ENCODE measurements at regions of chrX and their contacts with region 1.

Region 1: DNA sequence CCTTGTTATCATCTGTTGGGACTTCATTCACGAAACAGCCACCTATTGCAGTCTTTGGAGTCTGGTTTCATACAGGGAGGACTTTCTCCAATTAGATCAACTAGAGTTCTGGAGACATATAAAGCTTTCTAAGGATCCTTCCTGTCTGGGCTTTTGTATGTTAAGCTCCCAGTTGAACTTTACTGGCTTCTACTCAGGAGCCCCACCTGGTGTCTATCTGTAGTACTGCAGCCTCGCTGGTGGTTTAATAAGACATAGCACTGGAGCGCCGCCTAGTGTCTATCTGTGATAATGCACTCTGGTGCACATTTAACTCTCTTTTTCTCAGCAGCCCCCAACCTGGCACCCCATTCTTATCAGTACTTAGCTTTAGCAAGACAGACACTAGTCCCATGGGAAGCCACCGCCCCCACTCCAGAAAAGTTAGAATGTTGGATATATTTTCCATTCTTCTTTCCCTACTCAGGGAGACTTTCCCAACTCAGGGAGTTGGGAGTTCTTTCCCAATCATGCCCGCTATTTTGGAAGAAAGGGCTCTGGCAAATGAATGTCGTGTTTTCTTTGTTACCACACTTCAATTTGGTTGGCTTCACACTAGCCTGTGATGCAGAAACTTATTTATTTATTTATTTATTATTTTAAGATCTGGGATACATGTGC is 36.9 kb upstream of the SYTL4 start:
- DNase-seq: peak; percentile 72 to 94
- ATAC-seq: peak; percentile 78

Region 2: DNA sequence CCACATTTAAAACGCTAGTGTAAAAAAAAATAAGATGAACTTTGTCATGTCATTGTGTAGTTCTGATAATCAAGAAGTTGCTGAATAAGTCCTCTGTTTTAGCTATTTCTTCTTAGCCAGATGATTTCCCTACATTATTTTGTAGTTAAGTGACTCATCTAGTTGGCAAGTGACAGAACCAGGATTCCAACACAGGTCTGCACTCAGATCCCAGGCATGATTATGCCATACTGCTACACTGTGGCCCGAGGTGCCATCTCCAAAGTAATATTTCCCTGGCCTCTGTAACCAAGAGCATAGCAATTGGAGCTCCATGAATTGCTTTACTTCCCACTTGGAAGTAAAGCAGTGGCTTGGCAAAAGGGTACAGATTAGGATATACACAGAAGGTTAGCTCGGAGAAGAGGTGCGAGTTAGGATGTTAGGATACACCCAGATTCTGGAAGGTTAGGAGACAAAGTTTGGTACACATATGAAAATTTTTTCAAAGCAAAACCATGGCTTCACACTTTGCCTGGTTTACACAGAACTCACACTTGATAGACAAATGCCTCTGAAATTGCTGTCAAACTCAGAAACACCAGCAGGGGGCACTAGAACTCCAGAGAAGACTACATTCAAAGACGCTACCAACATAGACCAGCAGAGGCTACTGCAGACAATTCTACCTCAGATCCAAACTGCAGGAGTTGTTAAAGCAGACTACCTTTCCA is 83.4 kb before region 1 on chrX:
- intact Hi-C with region 1: loop called (anchors 2 to 10 kb)
- DNase-seq: peak; percentile 43 to 75
- ATAC-seq: peak; percentile 95

Region 3: GRCh38 chrX:101062176-101062575 is 293.4 kb after region 1 on chrX:
- intact Hi-C with region 1: no loop called
- DNase-seq: no peak
- ATAC-seq: no peak

Region 4: DNA sequence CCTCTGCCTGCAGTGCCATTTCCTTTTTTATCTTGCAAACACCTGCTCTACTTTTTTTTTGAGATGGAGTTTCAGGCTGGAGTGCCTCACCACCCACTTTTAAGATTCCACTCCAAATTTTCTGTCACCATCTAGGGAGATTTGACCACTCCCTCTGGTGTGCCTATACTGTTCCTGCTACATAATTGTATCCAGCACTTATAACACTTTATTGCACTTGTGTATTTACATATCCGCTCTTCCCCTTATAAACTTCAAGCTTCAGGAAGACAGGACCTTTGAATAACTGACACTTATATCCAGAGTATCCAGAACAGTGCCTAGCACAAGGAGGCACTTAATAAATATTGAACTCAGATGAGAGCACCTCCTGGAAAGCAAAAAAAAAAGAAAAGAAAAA is 323.0 kb after region 1 on chrX:
- intact Hi-C with region 1: no loop called
- DNase-seq: no peak
- ATAC-seq: peak; percentile 91

Region 5: GRCh38 chrX:101993335-101993734 is 1224.5 kb after region 1 on chrX:
- intact Hi-C with region 1: no loop called
- DNase-seq: no peak
- ATAC-seq: no peak

Measured in left colon (tissue), 2 donors.